GM23248 (cell line): ENCODE measurements at regions of chr2 and their contacts with region 1.

Region 1: DNA sequence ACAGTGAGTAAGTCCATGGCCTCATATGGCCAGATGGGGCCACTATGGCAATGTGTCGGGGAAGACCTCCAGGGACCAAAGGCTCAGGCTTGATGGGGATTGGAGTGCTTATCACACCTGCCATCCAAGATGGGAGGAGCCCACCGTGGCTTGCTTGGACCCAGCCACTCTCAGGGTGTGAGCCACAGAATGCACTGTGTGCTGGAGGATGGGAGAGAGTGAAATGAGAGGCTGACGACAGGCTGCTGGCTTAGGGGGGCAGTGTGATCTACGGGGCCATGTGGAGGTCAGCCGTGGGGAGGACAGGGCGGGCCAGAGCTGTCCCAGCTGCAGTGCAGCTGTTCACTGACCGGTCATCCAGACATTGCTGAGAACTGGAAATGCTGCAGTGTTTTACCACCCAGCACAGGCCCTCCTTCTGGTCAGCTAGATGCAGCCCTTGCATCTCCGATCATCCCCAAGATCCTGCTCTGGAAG is 339.6 kb downstream of the CYP26B1 start:
- DNase-seq: no peak
- H3K4me3 ChIP-seq: no peak overlapping the region
- H3K27ac ChIP-seq: no peak overlapping the region
- H3K4me1 ChIP-seq: no peaks in the 10 kb centered on the region
- H3K27me3 ChIP-seq: no peaks in the 10 kb centered on the region

Region 2: GRCh38 chr2:71995067-71995665 is 187.2 kb after region 1 on chr2:
- in situ Hi-C with region 1: loop called (anchors 5 kb)
- DNase-seq: peak; percentile 67
- H3K4me3 ChIP-seq: no peak overlapping the region
- H3K27ac ChIP-seq: no peak overlapping the region
- H3K4me1 ChIP-seq: no peaks in the 10 kb centered on the region
- H3K27me3 ChIP-seq: no peaks in the 10 kb centered on the region